ENCODE measurements at regions of chr20 and their contacts with region 1.

Region 1: DNA sequence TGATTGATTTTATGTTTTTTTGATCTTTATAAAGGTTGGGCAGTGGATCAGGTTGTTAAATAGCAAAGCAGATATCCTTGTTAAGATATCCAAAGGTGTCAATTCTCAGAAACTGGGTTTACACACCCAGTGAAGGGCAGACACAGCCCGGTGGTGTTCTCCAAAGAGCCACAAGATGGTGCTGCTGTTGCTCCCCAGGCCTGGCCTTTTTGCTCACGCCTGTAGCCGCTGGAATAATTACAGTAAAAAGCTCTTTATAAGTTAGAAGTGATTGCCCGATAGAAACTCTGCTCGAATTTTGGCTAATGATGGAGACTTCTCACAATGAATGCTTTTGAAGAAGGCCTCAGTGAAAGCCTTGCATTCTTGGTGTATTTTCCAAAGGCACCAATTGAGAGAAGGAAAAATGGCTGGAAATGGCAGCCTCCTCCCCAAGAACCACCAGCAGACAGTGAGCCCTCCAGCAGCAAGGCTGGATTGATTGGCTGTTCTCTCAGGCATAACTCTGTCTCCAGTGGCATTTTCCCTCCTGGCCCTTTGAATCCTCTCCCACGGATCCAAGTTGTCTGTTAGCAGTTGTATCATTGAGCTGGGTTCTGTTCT is 120.5 kb upstream of the CHD6 start:
- DNase-seq: peak; percentile 62
- ATAC-seq: peak; percentile 64
- H3K4me3 Mint-ChIP-seq: no peak overlapping the region
- H3K27ac Mint-ChIP-seq: no peak overlapping the region
- H3K4me1 Mint-ChIP-seq: no peaks in the 10 kb centered on the region
- H3K27me3 Mint-ChIP-seq: peaks cover 4% of the 10 kb centered on the region
- CTCF ChIP-seq: peak; percentile 94

Region 2: DNA sequence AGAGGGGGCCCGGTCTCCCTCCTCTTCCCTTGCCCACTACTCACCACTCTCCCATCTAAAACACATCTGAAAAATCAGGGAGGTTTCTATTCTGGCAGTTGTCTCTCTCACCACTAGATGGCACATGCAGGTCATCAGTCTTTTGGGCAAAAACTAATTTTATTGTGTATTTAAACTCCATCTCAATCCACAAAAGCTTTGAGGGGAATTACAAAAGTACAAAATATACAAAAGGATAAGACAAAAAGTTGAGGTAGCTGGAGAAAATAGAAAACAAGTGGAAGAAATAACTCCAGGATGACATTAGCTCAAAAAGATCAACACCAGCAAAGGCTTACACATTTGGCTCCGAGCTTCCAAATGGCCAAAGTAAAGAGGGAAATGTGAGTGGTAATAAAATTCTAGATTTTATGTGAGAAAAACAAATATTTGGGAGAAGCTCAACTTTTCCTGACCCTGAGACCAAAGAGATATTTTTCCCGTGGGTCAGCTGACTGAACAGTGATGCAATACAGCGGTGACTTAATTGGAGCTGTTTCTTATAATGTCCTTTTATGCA is 40.8 kb before region 1 on chr20:
- CTCF ChIA-PET with region 1: interaction called, 11 read pairs
- POLR2A ChIA-PET with region 1: no interaction called
- intact Hi-C with region 1: no loop called
- DNase-seq: peak; percentile 26
- ATAC-seq: no peak
- H3K4me3 Mint-ChIP-seq: no peak overlapping the region
- H3K27ac Mint-ChIP-seq: no peak overlapping the region
- H3K4me1 Mint-ChIP-seq: peaks cover 10% of the 10 kb centered on the region
- H3K27me3 Mint-ChIP-seq: no peaks in the 10 kb centered on the region
- CTCF ChIP-seq: peak; percentile 84

Region 3: DNA sequence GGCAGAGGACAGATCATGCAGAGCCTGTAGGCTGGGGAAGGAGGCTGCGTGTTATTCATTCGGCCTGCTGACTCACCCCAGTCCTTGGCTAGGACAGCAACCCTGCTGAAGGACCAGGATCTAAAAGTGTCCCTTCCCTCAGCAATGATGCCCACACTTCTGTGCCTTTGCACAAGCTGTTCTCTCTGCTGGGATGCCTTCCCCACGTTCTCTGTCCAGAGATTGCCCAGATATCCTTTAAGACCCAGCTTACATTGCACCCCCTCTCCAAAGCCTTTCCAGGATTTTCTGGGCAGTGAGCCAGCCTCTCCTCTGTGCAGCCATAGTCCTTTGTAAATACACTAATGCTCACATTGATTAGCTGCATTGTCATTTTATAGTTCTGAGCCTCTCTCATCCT is 21.2 kb before region 1 on chr20:
- CTCF ChIA-PET with region 1: interaction called, 10 read pairs
- POLR2A ChIA-PET with region 1: no interaction called
- intact Hi-C with region 1: no loop called
- DNase-seq: no peak
- ATAC-seq: no peak
- H3K4me3 Mint-ChIP-seq: no peak overlapping the region
- H3K27ac Mint-ChIP-seq: no peak overlapping the region
- H3K4me1 Mint-ChIP-seq: no peaks in the 10 kb centered on the region
- H3K27me3 Mint-ChIP-seq: peaks cover 9% of the 10 kb centered on the region
- CTCF ChIP-seq: no peak

Region 4: DNA sequence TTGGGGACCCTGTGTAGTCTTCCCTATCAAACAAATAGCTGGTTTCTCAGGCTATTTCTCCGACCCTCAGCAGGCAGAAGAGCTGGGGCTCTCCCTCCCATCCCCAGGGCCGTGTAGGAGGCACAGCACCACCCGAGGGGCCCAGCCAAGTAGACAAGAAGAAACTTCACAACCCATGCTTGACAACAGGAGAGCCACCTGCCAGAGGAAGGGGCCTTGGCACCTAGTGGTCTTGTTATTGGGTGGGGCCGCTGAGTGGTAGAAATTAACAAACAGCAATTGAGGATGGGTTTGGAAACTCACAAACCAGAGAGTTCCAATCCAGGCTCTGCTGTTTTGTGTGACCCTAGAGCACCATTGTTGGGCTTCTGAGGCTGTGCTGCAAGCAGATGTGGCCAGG is 12.0 kb before region 1 on chr20:
- CTCF ChIA-PET with region 1: interaction called, 16 read pairs
- POLR2A ChIA-PET with region 1: no interaction called
- intact Hi-C with region 1: no loop called
- DNase-seq: no peak
- ATAC-seq: no peak
- H3K4me3 Mint-ChIP-seq: no peak overlapping the region
- H3K27ac Mint-ChIP-seq: no peak overlapping the region
- H3K4me1 Mint-ChIP-seq: no peaks in the 10 kb centered on the region
- H3K27me3 Mint-ChIP-seq: peaks cover 1% of the 10 kb centered on the region
- CTCF ChIP-seq: no peak

Region 5: DNA sequence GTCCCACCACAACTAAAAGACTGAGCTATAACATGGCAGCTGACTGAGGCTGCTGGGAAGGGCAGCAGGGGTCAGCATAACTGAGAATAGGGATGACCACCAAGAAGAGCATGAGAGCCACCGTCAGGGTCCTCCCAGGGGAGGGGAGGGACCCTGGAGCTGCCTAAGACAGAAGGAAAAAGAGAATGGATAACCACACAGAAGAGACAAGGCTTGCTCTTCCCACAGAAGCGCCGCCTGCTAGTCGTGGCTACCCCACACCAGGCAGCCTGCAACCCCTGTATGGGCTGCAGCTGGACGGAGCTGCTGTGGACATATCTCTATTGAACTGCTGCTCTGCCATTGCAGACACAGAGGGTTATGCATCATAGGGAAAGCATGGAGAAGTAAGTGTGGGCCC is 11.4 kb after region 1 on chr20:
- CTCF ChIA-PET with region 1: interaction called, 12 read pairs
- POLR2A ChIA-PET with region 1: no interaction called
- intact Hi-C with region 1: no loop called
- DNase-seq: no peak
- ATAC-seq: no peak
- H3K4me3 Mint-ChIP-seq: no peak overlapping the region
- H3K27ac Mint-ChIP-seq: no peak overlapping the region
- H3K4me1 Mint-ChIP-seq: no peaks in the 10 kb centered on the region
- H3K27me3 Mint-ChIP-seq: peaks cover 16% of the 10 kb centered on the region
- CTCF ChIP-seq: no peak

Measured in activated CD8-positive, alpha-beta T cell treated with anti-CD3 and anti-CD28 coated beads for 36 hours (primary cell).